ENCODE measurements at regions of chr14 and their contacts with region 1.

Region 1: DNA sequence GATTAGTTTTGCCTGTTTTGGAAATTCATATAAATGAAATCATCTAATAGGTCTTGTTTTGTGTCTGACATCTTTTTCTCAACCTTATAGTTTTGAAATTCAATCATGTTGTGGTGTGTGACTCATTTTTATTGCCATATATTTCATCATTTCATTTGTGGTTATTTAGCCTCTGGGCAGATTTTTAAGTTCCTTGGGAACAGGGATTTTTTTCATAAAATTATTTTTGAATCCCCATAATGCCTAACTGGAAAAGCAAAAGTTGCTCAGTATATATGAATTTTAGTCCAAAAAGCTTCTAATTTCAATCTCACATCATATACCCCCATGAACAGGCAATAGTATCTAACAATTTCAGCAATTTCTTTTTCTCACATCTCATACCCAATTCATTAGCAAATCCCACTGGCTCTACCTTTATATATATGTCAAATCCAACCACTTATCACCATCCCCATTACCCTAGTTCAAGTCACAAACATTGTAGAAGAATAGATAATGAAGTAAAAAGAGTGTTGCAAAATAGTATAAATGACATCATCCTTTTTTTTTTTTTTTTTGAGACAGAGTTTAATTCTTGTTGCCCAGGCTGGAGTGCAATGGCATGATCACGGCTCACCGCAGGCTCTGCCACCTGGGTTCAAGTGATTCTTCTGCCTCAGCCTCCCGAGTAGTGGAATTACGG is 2.6 kb upstream of the OR6J1 start:
- DNase-seq: peak; percentile 77
- H3K4me3 Mint-ChIP-seq: peak overlapping the region; percentile 34
- H3K27ac Mint-ChIP-seq: peak overlapping the region; percentile 94
- H3K4me1 Mint-ChIP-seq: peaks cover 40% of the 10 kb centered on the region
- H3K27me3 Mint-ChIP-seq: no peaks in the 10 kb centered on the region
- CTCF ChIP-seq: no peak

Region 2: DNA sequence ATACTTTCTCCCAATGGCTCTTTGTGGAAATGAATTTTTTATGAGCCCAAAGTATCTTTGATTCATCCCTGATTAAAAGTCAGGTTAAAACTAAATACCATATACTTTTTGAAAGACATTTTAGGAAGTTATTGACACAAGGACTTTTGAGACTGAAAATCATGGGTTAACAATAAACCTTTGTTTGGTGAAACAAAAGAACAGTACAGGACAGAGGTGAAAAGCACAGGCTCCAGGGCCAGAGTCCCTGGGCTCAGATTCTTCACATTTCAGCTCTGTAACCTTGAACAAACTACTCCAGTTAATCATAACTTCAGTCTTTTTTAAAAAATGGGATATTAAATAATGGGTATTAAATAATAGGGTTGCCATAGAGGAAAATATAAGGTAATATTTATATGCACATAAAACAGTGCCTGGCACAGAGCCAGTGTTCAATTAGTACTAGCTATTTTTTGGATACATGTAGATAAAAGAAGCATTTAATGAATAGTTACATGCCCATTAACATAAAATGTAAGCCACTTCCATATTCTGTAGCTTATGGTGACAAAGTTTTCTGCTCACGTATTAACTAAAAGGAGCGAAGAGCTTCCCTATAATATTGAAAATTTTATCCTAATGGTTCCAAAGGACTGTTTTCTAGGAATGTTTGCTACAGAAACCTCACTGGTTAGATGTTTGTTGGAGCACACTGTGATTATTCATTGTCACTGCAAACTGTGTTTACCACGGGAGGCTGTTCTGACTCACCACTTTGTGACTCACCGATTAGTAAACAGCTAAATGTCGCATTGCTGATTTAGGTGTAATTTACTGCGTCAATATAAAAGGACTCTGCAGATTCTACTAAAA is 313.1 kb before region 1 on chr14:
- CTCF ChIA-PET with region 1: no interaction called
- POLR2A ChIA-PET with region 1: no interaction called
- intact Hi-C with region 1: no loop called
- DNase-seq: peak; percentile 55
- H3K4me3 Mint-ChIP-seq: peak overlapping the region; percentile 29
- H3K27ac Mint-ChIP-seq: no peak overlapping the region
- H3K4me1 Mint-ChIP-seq: no peaks in the 10 kb centered on the region
- H3K27me3 Mint-ChIP-seq: no peaks in the 10 kb centered on the region
- CTCF ChIP-seq: no peak

Region 3: GRCh38 chr14:22358726-22359125 is 288.0 kb before region 1 on chr14:
- CTCF ChIA-PET with region 1: no interaction called
- POLR2A ChIA-PET with region 1: no interaction called
- intact Hi-C with region 1: no loop called
- DNase-seq: no peak
- H3K4me3 Mint-ChIP-seq: no peak overlapping the region
- H3K27ac Mint-ChIP-seq: no peak overlapping the region
- H3K4me1 Mint-ChIP-seq: no peaks in the 10 kb centered on the region
- H3K27me3 Mint-ChIP-seq: peaks cover 18% of the 10 kb centered on the region
- CTCF ChIP-seq: no peak

Region 4: GRCh38 chr14:22579236-22579635 is 67.5 kb before region 1 on chr14:
- CTCF ChIA-PET with region 1: interaction called, 11 read pairs
- POLR2A ChIA-PET with region 1: interaction called, 6 read pairs
- intact Hi-C with region 1: no loop called
- DNase-seq: no peak
- H3K4me3 Mint-ChIP-seq: no peak overlapping the region
- H3K27ac Mint-ChIP-seq: no peak overlapping the region
- H3K4me1 Mint-ChIP-seq: peaks cover 21% of the 10 kb centered on the region
- H3K27me3 Mint-ChIP-seq: no peaks in the 10 kb centered on the region
- CTCF ChIP-seq: no peak

Region 5: DNA sequence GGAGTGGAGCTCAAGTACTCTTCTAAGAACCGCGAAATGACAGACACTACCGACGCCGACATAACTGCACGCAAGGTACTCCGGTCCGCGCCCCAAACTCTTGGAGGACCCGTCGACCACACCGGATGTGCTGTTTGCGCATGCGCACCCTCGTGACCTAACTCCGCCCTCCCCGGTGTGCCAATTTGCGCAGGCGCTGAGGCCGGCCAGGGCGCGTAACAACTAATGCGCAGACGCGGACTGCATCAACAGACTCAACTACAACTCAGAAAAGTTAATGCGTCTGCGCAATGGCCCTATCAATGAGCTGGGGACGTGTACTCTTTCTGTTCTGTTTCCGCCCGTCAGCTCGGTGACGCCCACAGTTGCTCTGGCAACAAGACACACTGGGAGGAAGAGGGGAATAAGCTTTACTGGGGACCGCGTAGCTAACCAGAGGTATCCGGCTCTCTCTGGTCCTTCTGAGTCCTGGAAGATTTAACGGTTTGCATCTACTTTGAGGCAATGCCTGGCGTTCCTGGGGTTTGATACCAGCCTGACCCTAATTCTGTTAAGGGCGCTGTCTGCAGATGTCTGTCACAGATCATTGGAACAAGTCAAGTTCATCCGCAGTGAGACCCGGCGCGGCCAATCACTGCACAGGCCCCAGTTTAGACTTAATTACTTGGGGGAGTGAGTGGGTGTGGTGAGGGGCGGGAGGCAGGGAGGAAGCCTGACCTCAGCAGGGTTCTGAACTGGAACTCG is 57.4 kb before region 1 on chr14 and contains the start of gene DAD1:
- CTCF ChIA-PET with region 1: interaction called, 14 read pairs
- POLR2A ChIA-PET with region 1: interaction called, 22 read pairs
- intact Hi-C with region 1: loop called (anchors 1 kb)
- DNase-seq: peak; percentile 99
- H3K4me3 Mint-ChIP-seq: peak within 1 kb of the TSS; percentile 92
- H3K27ac Mint-ChIP-seq: peak within 1 kb of the TSS; percentile 96
- H3K4me1 Mint-ChIP-seq: peaks cover 21% of the 10 kb centered on the region
- H3K27me3 Mint-ChIP-seq: peaks cover 25% of the 10 kb centered on the region
- CTCF ChIP-seq: no peak
- total RNA-seq, gene DAD1: 166 and 210 TPM in 2 replicates

Region 6: GRCh38 chr14:22598099-22598899 is 48.4 kb before region 1 on chr14 and contains the start of gene ABHD4:
- CTCF ChIA-PET with region 1: interaction called, 69 read pairs
- POLR2A ChIA-PET with region 1: interaction called, 70 read pairs
- intact Hi-C with region 1: no loop called
- DNase-seq: peak; percentile 60
- H3K4me3 Mint-ChIP-seq: peak within 1 kb of the TSS; percentile 97
- H3K27ac Mint-ChIP-seq: peak within 1 kb of the TSS; percentile 88
- H3K4me1 Mint-ChIP-seq: peaks cover 15% of the 10 kb centered on the region
- H3K27me3 Mint-ChIP-seq: peaks cover 26% of the 10 kb centered on the region
- CTCF ChIP-seq: no peak
- total RNA-seq, gene ABHD4: 10.3 and 16.7 TPM in 2 replicates

Region 7: DNA sequence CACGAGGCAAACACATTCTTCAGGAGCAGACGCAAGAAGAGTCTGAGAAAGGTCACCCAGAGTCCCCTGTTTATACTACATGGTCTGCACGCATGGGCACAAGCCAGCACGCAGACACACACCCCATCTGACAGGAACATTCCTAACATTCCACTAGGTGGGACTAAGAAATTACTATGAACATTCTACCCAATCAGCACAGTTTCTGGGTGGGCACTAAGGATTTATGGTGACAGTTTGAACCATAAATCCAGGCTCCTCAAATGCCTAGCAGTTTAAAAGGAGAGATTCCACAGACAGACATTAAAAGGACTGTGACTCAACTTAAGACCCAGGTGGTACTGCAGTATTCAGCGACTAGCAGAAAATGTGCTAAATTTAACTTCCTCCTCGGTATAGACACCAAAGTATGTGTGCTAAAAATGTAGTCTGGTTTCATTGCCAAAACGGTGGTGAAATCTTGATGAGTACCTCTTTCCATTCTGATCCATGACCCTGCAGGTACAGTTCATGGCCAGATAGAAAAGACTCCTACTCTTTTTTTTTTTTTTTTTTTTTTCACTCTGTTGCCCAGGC is 32.4 kb before region 1 on chr14:
- CTCF ChIA-PET with region 1: interaction called, 10 read pairs
- POLR2A ChIA-PET with region 1: interaction called, 4 read pairs
- intact Hi-C with region 1: loop called (anchors 2 kb)
- DNase-seq: peak; percentile 91
- H3K4me3 Mint-ChIP-seq: no peak overlapping the region
- H3K27ac Mint-ChIP-seq: peak overlapping the region; percentile 63
- H3K4me1 Mint-ChIP-seq: peaks cover 20% of the 10 kb centered on the region
- H3K27me3 Mint-ChIP-seq: no peaks in the 10 kb centered on the region
- CTCF ChIP-seq: no peak

Region 8: GRCh38 chr14:22634233-22634900 is 12.3 kb before region 1 on chr14:
- CTCF ChIA-PET with region 1: interaction called, 13 read pairs
- POLR2A ChIA-PET with region 1: interaction called, 7 read pairs
- intact Hi-C with region 1: no loop called
- DNase-seq: no peak
- H3K4me3 Mint-ChIP-seq: no peak overlapping the region
- H3K27ac Mint-ChIP-seq: no peak overlapping the region
- H3K4me1 Mint-ChIP-seq: no peaks in the 10 kb centered on the region
- H3K27me3 Mint-ChIP-seq: peaks cover 41% of the 10 kb centered on the region
- CTCF ChIP-seq: no peak